CD8-positive, alpha-beta T cell (primary cell): ENCODE measurements at regions of chr4 and their contacts with region 1.

Region 1: GRCh38 chr4:61239250-61239649 is 39.1 kb downstream of the ADGRL3 start:
- DNase-seq: no peak
- ATAC-seq: no peak
- H3K4me3 ChIP-seq: no peak overlapping the region
- H3K4me3 Mint-ChIP-seq: no peak overlapping the region
- H3K27ac ChIP-seq: no peak overlapping the region
- H3K27ac Mint-ChIP-seq: no peak overlapping the region
- H3K4me1 ChIP-seq: no peaks in the 10 kb centered on the region
- H3K4me1 Mint-ChIP-seq: no peaks in the 10 kb centered on the region
- H3K27me3 ChIP-seq: no peaks in the 10 kb centered on the region
- H3K27me3 Mint-ChIP-seq: no peaks in the 10 kb centered on the region
- CTCF ChIP-seq: no peak

Region 2: GRCh38 chr4:62644372-62644771 is 1405.1 kb after region 1 on chr4:
- CTCF ChIA-PET with region 1: no interaction called
- POLR2A ChIA-PET with region 1: no interaction called
- intact Hi-C with region 1: loop called in 1 of 2 experiments (anchors 5 kb)
- DNase-seq: no peak
- ATAC-seq: no peak
- H3K4me3 ChIP-seq: no peak overlapping the region
- H3K4me3 Mint-ChIP-seq: no peak overlapping the region
- H3K27ac ChIP-seq: no peak overlapping the region
- H3K27ac Mint-ChIP-seq: no peak overlapping the region
- H3K4me1 ChIP-seq: no peaks in the 10 kb centered on the region
- H3K4me1 Mint-ChIP-seq: no peaks in the 10 kb centered on the region
- H3K27me3 ChIP-seq: no peaks in the 10 kb centered on the region
- H3K27me3 Mint-ChIP-seq: no peaks in the 10 kb centered on the region
- CTCF ChIP-seq: no peak